ENCODE measurements at regions of chr9 and their contacts with region 1.

Region 1: DNA sequence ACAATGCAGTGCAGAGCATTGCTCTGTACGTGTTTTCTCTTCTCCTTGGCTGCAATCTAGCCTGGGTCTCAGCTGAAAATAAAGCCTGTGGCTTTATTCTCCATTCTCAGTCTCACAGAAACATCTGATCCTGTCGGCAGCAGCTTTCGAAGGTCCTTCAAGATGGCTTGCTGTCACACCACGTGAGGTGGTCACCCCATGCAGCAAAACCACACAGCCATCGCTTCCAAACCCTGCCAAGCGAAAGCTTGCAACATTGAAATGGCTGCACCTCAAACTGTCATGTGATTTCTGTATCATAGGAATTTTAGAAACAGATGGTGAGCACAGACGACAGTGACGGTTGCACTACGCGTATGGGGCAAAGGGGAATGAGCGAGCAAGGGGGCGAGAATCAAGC is 98.5 kb upstream of the SMARCA2 start:
- DNase-seq: no peak
- ATAC-seq: no peak
- H3K4me3 ChIP-seq: no peak overlapping the region
- H3K27ac ChIP-seq: no peak overlapping the region
- H3K4me1 ChIP-seq: peaks cover 3% of the 10 kb centered on the region; the same call in 1 of the 2 replicates
- H3K27me3 ChIP-seq: no peaks in the 10 kb centered on the region
- CTCF ChIP-seq: no peak
- EP300 ChIP-seq: no peak
- POLR2A ChIP-seq: no peak
- RAD21 ChIP-seq: no peak

Region 2: DNA sequence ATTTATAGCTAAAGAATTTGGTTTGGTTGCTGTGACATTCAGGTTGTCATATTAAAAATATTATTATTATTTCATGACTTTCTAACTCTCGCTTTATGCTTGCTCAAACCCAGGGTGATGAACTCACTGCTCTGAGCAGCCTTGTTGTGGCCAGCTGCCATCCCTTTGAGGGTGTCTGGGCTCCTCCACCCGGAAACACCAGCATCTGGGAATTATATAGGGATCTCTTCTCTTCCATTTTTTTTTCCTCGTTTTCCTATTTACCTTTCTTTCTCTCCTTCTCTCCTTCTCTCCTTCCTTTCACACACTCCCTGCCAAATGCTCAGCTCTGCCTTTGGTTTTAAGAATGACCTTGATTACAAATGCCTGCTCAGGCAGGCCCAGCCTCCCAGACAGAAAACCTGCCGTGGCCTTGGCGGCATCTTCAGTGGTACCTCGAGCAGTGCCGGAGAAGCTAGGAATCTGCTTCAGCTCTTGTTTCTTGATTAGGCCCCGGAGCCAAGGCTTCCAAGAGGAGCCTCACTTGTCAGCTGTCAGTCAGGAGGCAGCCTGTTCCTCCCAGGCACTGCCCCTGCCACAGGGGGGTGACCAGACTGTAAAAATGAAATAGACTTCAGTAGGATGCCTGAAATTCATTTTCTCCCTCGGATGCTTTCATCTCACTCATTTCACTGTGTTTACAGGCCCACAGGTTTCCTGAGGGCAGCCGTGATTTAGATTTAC is 257.1 kb before region 1 on chr9:
- CTCF ChIA-PET with region 1: no interaction called
- POLR2A ChIA-PET with region 1: no interaction called
- RAD21 ChIA-PET with region 1: no interaction called
- SMC1A ChIA-PET with region 1: no interaction called
- in situ Hi-C with region 1: no loop called
- intact Hi-C with region 1: no loop called
- DNase-seq: no peak
- ATAC-seq: no peak
- H3K4me3 ChIP-seq: no peak overlapping the region
- H3K27ac ChIP-seq: no peak overlapping the region
- H3K4me1 ChIP-seq: no peaks in the 10 kb centered on the region
- H3K27me3 ChIP-seq: no peaks in the 10 kb centered on the region
- CTCF ChIP-seq: no peak
- EP300 ChIP-seq: no peak
- POLR2A ChIP-seq: no peak
- RAD21 ChIP-seq: no peak

Region 3: DNA sequence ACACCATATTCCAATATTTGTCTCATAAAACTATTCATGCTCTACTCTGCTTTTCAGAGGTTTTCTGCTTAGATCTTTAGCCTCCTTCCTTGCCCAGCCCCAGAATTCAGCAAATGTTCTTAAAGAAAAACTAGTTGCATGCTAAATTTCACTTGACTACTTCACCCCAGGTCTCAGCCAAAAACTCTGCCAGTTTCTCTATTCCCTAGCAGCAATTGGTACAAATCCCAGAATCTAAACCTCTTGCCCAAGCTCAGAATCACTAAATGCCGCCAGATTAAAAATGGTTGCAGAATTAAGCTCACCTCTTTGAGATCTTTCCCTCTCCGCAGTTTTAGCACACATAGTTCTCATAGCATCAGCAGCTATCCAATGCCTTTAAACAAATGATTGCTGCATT is 232.7 kb before region 1 on chr9:
- CTCF ChIA-PET with region 1: no interaction called
- POLR2A ChIA-PET with region 1: no interaction called
- RAD21 ChIA-PET with region 1: no interaction called
- SMC1A ChIA-PET with region 1: no interaction called
- in situ Hi-C with region 1: no loop called
- intact Hi-C with region 1: no loop called
- DNase-seq: no peak
- ATAC-seq: no peak
- H3K4me3 ChIP-seq: no peak overlapping the region
- H3K27ac ChIP-seq: no peak overlapping the region
- H3K4me1 ChIP-seq: no peaks in the 10 kb centered on the region
- H3K27me3 ChIP-seq: no peaks in the 10 kb centered on the region; a peak in 2 of 4 replicates
- CTCF ChIP-seq: no peak
- EP300 ChIP-seq: no peak
- POLR2A ChIP-seq: no peak
- RAD21 ChIP-seq: no peak

Region 4: DNA sequence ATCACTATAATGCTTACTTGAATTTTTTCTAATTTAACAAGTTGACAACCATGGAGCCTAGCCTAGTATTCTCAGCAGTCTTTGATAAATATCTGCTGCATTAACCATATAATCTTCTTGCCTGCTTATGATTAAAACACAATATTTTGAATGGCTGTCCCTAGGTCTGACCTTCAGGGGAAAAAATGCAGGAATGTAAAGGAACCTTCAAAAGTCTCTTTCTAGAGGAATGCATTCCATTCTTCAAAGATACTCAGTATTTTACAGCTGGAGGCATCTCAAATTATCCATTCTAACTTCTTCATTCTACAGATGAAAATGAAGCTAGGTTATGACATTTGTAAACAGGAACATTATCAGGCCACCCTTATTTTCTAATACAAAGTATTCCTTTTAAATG is 20.7 kb before region 1 on chr9:
- CTCF ChIA-PET with region 1: interaction called, 5 read pairs
- POLR2A ChIA-PET with region 1: no interaction called
- RAD21 ChIA-PET with region 1: no interaction called
- SMC1A ChIA-PET with region 1: interaction called, 11 read pairs
- in situ Hi-C with region 1: no loop called
- intact Hi-C with region 1: no loop called
- DNase-seq: no peak
- ATAC-seq: no peak
- H3K4me3 ChIP-seq: no peak overlapping the region
- H3K27ac ChIP-seq: no peak overlapping the region
- H3K4me1 ChIP-seq: no peaks in the 10 kb centered on the region
- H3K27me3 ChIP-seq: no peaks in the 10 kb centered on the region
- CTCF ChIP-seq: no peak
- EP300 ChIP-seq: no peak
- POLR2A ChIP-seq: no peak
- RAD21 ChIP-seq: no peak

Region 5: GRCh38 chr9:1929722-1930621 is 13.3 kb after region 1 on chr9:
- CTCF ChIA-PET with region 1: interaction called, 9 read pairs
- POLR2A ChIA-PET with region 1: interaction called, 7 read pairs
- RAD21 ChIA-PET with region 1: interaction called, 10 read pairs
- SMC1A ChIA-PET with region 1: interaction called, 19 read pairs
- in situ Hi-C with region 1: no loop called
- intact Hi-C with region 1: no loop called
- DNase-seq: peak; percentile 84
- ATAC-seq: peak; percentile 87
- H3K4me3 ChIP-seq: peak overlapping the region; percentile 58
- H3K27ac ChIP-seq: peak overlapping the region; percentile 88
- H3K4me1 ChIP-seq: peaks cover 24% of the 10 kb centered on the region
- H3K27me3 ChIP-seq: no peaks in the 10 kb centered on the region
- CTCF ChIP-seq: 0 out of 6 replicates have a peak, but pooled peaks of 1 of the 3 experiments have one; percentile 6
- EP300 ChIP-seq: peak; percentile 39 to 73; a peak in 1 of 4 replicates
- POLR2A ChIP-seq: no peak
- RAD21 ChIP-seq: peak; percentile 44

Measured in GM12878 (cell line).